Cardiac septum (tissue), 1 donor: ENCODE measurements at regions of chr10 and their contacts with region 1.

Region 1: GRCh38 chr10:75111367-75111906 is at the start of gene SAMD8:
- DNase-seq: peak; percentile 98
- total RNA-seq, gene SAMD8: 25.7 TPM

Region 2: DNA sequence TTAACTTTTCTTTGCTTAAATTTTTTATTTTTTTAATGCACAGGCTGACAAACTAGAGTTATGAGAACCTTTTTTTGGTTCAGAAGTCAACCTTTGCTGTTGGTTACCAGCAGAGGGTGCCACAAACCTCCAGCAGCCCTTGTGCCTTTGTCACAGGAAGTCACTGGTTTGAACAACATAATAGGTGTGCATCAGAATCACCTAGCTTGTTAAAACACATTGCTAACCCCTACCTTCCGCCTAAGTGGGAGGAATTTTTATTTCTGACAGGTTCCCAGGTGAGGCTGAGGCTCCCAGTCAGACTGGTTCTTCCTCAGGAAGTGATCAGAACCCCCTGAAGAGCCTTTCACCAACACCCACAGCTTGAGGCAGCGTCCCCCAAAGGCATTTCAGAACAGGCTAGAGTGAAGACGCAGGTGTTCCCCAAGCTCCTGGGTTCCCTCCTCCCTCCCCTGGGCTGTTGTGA is 76.6 kb after region 1 on chr10:
- intact Hi-C with region 1: loop called (anchors 5 kb)
- DNase-seq: peak; percentile 65

Region 3: DNA sequence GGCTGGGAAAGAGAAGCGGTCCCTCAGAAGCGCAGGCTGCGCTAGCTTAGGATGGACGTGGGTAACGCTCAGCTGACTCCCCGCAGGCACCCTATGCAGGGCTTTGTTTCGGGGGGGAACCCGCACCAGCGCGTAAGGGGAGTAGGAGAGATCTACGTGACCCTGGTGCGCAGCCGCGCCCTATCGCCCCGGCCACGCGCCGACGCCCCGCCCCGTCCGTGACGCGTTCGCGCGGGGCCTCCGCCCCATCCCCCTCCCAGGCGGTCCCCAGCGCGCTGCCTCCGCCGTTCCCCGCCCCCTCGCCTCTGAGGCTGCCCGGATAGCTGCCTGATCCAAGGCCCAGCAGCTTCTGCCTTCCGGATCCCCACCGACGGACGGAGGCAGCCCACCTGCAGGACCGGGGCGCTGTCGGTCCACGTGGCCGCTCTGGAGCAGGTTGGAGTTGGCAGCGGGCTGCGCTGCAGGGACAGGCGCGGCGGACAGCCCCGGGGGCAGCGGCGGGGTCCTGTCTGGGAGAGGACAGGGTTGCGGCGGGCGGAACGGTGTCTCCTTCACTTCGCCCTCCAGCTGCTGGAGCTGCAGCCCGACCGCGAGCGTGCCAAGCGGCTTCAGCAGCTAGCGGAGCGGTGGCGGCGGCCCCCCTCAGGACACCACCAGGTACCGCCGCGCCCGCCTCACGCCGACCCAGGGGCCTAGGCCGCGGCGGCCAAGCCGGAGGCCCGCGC is 99.0 kb after region 1 on chr10 and contains the start of gene VDAC2:
- intact Hi-C with region 1: loop called (anchors 1 kb)
- DNase-seq: peak; percentile 96
- total RNA-seq, gene VDAC2: 388 TPM

Region 4: GRCh38 chr10:75229971-75230370 is 118.5 kb after region 1 on chr10:
- intact Hi-C with region 1: loop called (anchors 5 kb)
- DNase-seq: no peak

Region 5: GRCh38 chr10:75305675-75306074 is 194.2 kb after region 1 on chr10:
- intact Hi-C with region 1: no loop called
- DNase-seq: no peak

Region 6: DNA sequence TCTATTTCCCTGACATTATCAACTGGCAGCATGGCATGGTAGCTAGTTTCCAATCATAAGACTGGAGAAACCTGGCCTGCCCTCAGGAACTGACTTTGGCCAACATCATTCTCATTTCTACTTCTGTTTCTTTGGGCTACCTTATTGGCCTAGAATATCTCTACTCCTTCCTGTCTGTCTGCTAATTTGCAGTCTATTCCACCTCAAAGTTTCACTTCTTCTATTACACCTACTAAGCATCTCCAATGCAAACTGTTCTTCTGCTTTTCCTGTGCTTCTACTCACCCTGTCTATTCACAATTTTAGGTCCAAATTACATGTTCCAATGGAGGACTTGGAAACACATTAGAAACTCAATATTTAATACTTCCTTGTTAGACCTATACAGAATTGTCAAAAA is 224.5 kb after region 1 on chr10:
- intact Hi-C with region 1: no loop called
- DNase-seq: no peak